ENCODE measurements at regions of chr10 and their contacts with region 1.

Region 1: DNA sequence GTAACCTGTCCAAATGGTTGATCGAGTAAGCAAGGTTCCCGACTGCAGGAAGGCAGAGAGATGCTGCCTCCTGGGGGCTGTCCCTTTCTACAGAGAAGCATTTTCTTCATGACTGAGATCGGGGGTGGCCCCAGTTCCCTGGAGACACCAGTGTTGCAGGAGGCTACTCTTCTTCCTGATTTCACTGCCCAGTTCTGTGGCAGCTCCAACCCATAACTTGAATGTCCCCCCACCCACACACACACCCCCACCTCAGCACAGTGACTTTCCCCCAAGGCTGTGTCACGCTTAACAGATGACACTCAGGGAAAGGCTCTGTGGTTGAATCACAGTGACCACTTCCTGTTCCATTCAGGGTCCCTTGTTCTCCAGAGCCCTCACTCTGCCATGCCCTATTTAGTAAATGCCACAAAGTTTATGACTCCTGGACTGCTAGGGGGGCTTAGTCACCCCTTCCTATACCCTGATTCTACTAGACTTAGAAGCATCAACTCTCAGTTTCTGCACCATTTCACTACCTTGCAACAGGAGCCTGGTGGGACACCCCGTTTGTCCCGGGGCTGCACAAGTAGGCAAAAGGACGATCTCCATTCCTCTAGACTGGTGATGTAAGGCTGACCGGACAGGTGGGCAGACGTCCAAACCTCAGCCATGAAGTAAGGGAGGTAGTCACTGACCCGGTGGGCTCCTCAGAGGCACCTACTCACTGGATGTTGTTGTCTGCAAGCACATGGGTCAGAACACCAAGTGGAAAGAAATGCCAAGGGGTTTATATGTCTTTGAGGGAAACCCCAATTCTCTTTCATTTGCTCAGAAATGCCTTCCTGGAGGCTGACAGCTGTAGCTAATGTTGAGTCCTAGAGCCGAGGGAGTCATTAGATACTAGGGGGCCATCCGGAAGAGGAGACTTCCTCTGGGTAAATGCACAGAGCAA is 31.3 kb upstream of the SMC3 start:
- DNase-seq: peak; percentile 61
- CTCF ChIP-seq: peak; percentile 46

Region 2: GRCh38 chr10:110326351-110327032 is 209.7 kb before region 1 on chr10:
- in situ Hi-C with region 1: loop called (anchors 10 kb)
- DNase-seq: peak; percentile 62
- CTCF ChIP-seq: no peak

Region 3: GRCh38 chr10:110446954-110447608 is 89.1 kb before region 1 on chr10:
- in situ Hi-C with region 1: no loop called
- DNase-seq: no peak
- CTCF ChIP-seq: no peak

Region 4: GRCh38 chr10:111856631-111857030 is 1320.4 kb after region 1 on chr10:
- in situ Hi-C with region 1: no loop called
- DNase-seq: no peak
- CTCF ChIP-seq: no peak

Measured in GM13977 (cell line).